MCF 10A (cell line): ENCODE measurements at regions of chr15 and their contacts with region 1.

Region 1: DNA sequence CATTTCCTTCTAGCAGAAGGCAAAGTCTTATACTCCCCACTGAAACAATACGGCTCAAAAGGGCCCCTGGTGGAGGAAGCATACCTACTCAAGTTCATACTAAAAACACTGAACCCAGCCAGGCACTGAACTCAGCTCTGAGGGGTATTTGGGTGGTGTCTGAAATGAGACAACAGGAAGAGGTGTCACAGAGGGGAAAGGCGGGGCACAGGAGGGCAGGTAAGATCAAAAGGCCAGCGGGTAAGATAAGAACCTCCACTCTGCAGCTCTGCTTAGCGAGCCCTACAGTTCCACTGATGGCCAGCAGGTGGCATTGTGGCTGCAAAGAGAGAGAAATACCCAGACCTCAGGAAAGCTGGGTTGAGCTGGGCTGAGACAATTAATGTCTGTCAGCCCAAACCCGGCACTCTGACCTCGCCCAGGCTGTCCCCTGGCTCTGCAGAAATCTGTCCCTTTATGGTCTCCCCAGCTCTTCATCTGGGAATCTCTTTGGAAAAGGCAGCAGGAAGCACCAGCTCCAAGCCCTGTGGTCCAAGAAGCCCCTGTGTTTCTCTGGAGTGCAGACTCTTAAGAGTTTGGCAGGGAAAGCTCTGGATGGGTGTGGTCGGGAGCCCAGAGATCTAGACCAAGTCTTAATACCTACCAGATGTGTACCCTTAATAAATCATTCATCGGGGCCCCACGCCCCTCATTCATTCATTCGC is 8.4 kb downstream of the MFGE8 start:
- DNase-seq: peak; percentile 80
- H3K4me3 Mint-ChIP-seq: no peak overlapping the region
- H3K27ac Mint-ChIP-seq: no peak overlapping the region
- H3K4me1 Mint-ChIP-seq: peaks cover 20% of the 10 kb centered on the region
- H3K27me3 Mint-ChIP-seq: no peaks in the 10 kb centered on the region
- CTCF ChIP-seq: peak; percentile 95

Region 2: GRCh38 chr15:88657326-88658069 is 247.3 kb before region 1 on chr15:
- CTCF ChIA-PET with region 1: interaction called, 35 read pairs
- POLR2A ChIA-PET with region 1: interaction called, 3 read pairs
- intact Hi-C with region 1: no loop called
- DNase-seq: peak; percentile 65
- H3K4me3 Mint-ChIP-seq: no peak overlapping the region
- H3K27ac Mint-ChIP-seq: no peak overlapping the region
- H3K4me1 Mint-ChIP-seq: peaks cover 50% of the 10 kb centered on the region
- H3K27me3 Mint-ChIP-seq: no peaks in the 10 kb centered on the region
- CTCF ChIP-seq: peak; percentile 85

Region 3: GRCh38 chr15:88995449-88995848 is 90.7 kb after region 1 on chr15:
- CTCF ChIA-PET with region 1: interaction called, 10 read pairs
- POLR2A ChIA-PET with region 1: no interaction called
- intact Hi-C with region 1: no loop called
- DNase-seq: peak; percentile 17
- H3K4me3 Mint-ChIP-seq: no peak overlapping the region
- H3K27ac Mint-ChIP-seq: no peak overlapping the region
- H3K4me1 Mint-ChIP-seq: peaks cover 7% of the 10 kb centered on the region
- H3K27me3 Mint-ChIP-seq: no peaks in the 10 kb centered on the region
- CTCF ChIP-seq: no peak

Region 4: DNA sequence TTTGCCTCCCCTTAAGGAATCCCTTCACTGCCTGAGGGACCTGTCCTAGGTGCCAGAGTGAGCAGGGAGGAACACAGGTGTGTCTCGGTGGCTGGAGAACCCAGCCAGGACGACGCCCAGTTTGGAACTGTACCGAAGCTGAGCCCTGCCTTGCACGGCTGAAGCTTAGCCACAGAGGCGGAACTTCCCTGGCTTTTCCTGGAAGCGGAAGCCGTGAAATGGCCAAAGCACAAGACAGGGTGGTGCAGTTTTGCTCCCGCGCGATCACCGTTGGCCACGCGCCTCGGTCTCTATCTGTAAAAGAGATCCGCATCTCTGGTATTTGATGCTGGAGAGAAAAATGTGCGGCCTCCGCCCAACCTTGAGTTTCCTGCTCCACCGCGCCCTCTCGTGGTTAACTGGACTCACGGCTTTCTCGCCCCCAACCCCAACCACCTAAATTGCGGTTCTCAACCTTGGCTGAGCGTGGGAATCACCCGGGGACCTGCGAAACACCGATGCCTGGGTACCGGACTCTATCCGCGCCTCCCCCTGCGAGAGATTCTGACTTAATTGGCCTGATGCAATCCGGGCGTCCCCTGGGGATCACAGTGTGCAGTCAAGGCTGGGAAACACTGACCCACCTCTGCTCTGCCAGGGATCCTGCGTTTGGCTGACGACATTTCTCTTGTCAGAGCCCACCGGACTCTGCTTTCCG is 112.7 kb after region 1 on chr15:
- CTCF ChIA-PET with region 1: interaction called, 128 read pairs
- POLR2A ChIA-PET with region 1: interaction called, 12 read pairs
- intact Hi-C with region 1: loop called (anchors 1 kb)
- DNase-seq: peak; percentile 88
- H3K4me3 Mint-ChIP-seq: peak overlapping the region; percentile 57
- H3K27ac Mint-ChIP-seq: peak overlapping the region; percentile 72
- H3K4me1 Mint-ChIP-seq: peaks cover 22% of the 10 kb centered on the region
- H3K27me3 Mint-ChIP-seq: no peaks in the 10 kb centered on the region
- CTCF ChIP-seq: peak; percentile 76

Region 5: GRCh38 chr15:89171136-89172072 is 266.6 kb after region 1 on chr15:
- CTCF ChIA-PET with region 1: interaction called, 12 read pairs
- POLR2A ChIA-PET with region 1: no interaction called
- intact Hi-C with region 1: loop called (anchors 2 kb)
- DNase-seq: peak; percentile 70
- H3K4me3 Mint-ChIP-seq: no peak overlapping the region
- H3K27ac Mint-ChIP-seq: no peak overlapping the region
- H3K4me1 Mint-ChIP-seq: peaks cover 19% of the 10 kb centered on the region
- H3K27me3 Mint-ChIP-seq: no peaks in the 10 kb centered on the region
- CTCF ChIP-seq: peak; percentile 65